Left colon (tissue), 2 donors: ENCODE measurements at regions of chr3 and their contacts with region 1.

Region 1: GRCh38 chr3:46488735-46489361 is 8.9 kb upstream of the RTP3 start:
- DNase-seq: peak; percentile 93 to 99
- ATAC-seq: peak; percentile 95

Region 2: DNA sequence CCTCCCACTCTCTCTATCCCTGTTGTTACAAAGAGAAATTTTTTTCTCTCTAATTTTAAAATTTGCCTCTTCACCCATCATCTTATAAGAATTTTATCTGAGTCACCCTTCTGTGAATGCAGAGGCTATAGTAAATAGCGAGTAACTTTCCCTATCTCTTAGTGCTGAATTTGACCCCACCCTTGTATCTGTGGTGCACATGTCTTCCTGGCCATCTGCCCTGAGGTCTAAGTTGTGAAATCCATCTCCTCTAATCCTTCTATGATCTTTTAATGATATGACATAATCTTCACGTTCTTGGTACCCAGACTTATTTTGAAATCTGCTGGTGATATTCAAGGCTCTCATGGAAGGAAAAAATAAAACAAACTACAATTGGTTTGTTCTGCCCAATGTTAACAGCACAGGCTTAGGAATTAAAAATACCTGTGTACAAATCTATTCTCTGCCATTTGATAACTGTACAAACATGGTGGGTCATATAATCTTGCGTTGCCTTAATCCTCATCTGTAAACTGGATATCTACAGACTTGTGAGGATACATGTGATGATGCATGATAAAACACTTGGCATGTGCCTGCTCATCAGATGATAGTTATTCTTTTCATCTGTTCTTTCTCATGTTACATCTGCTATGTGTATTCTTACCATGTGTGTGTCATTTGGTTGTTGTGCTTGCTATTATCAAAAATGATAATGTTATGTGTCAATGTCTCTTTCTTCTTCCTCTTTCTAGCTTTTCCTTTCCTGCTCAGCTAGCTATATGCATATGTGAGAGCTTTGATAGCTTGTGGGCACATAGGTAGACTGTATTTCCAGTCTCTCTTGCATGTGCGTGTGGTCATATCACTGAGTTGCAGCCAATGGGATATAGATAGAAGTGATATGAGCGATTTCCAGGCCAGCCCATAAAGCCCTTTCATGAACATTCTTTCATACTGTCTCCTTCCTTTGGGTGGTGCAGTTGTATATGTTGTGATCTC is 260.3 kb before region 1 on chr3:
- intact Hi-C with region 1: no loop called
- DNase-seq: no peak
- ATAC-seq: no peak

Region 3: GRCh38 chr3:46558184-46559043 is 69.6 kb after region 1 on chr3:
- intact Hi-C with region 1: loop called in 1 of 2 experiments (anchors 10 kb)
- DNase-seq: peak; percentile 89 to 92
- ATAC-seq: peak; percentile 100

Region 4: GRCh38 chr3:46615050-46615775 is 126.4 kb after region 1 on chr3:
- intact Hi-C with region 1: no loop called
- DNase-seq: no peak
- ATAC-seq: no peak

Region 5: GRCh38 chr3:46629551-46630517 is 141.0 kb after region 1 on chr3:
- intact Hi-C with region 1: loop called in 1 of 2 experiments (anchors 5 kb)
- DNase-seq: peak; percentile 78 to 86
- ATAC-seq: peak; percentile 80